ENCODE measurements at regions of chr1 and their contacts with region 1.

Region 1: GRCh38 chr1:6343506-6344405 is 49.8 kb downstream of the ACOT7 start:
- DNase-seq: peak; percentile 50
- ATAC-seq: peak; percentile 79
- H3K4me3 ChIP-seq: peak overlapping the region in 1 of 3 experiments; percentile 42; a peak in 2 of 6 replicates
- H3K27ac ChIP-seq: peak overlapping the region; percentile 17
- H3K4me1 ChIP-seq: peaks cover 12% of the 10 kb centered on the region
- H3K27me3 ChIP-seq: no peaks in the 10 kb centered on the region
- CTCF ChIP-seq: peak; percentile 98
- EP300 ChIP-seq: no peak
- POLR2A ChIP-seq: no peak
- RAD21 ChIP-seq: peak; percentile 82

Region 2: GRCh38 chr1:5415621-5416020 is 928.1 kb before region 1 on chr1:
- CTCF ChIA-PET with region 1: no interaction called
- POLR2A ChIA-PET with region 1: no interaction called
- in situ Hi-C with region 1: no loop called
- intact Hi-C with region 1: no loop called
- DNase-seq: no peak
- ATAC-seq: no peak
- H3K4me3 ChIP-seq: no peak overlapping the region
- H3K27ac ChIP-seq: no peak overlapping the region
- H3K4me1 ChIP-seq: no peaks in the 10 kb centered on the region
- H3K27me3 ChIP-seq: peaks cover 1 to 8% of the 10 kb centered on the region in 2 experiments; a peak in 4 of 5 replicates
- CTCF ChIP-seq: no peak
- EP300 ChIP-seq: no peak
- POLR2A ChIP-seq: no peak
- RAD21 ChIP-seq: no peak

Region 3: DNA sequence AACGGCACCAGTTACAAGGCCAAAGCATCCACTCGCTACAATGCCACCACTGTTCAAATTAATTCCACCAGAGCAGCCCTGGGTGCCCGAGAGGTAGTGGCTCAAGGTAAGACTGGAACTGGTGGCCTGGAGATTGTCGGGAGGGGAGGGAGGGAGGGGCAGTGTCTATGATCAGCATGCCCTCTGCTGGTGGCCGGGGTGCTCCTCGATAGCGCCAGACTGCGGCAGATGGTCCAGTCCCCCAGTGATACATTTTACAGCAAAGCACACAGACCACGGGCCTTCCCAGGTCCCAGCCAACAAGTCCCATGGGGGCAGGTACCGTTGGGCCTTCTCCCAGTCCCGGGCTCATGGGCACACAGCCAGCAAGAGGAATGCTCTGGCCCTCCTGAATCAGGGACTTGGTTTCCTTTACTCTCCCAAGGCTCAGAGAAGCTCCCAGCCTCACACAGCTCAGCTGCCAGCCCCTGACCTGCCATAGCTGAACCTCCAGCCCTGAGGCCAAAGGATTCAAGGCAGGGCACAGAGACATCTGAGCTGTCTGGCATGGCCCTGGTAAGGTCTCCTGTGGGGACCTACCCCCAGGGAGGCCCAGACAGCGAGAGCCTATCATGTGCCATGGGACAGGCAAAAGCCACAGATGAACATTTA is 34.5 kb after region 1 on chr1:
- CTCF ChIA-PET with region 1: interaction called, 3 read pairs
- POLR2A ChIA-PET with region 1: no interaction called
- in situ Hi-C with region 1: no loop called
- intact Hi-C with region 1: loop called (anchors 1 kb)
- DNase-seq: no peak
- ATAC-seq: peak; percentile 96
- H3K4me3 ChIP-seq: no peak overlapping the region
- H3K27ac ChIP-seq: no peak overlapping the region
- H3K4me1 ChIP-seq: peaks cover 6% of the 10 kb centered on the region
- H3K27me3 ChIP-seq: no peaks in the 10 kb centered on the region
- CTCF ChIP-seq: peak; percentile 79
- EP300 ChIP-seq: no peak
- POLR2A ChIP-seq: no peak
- RAD21 ChIP-seq: no peak

Region 4: DNA sequence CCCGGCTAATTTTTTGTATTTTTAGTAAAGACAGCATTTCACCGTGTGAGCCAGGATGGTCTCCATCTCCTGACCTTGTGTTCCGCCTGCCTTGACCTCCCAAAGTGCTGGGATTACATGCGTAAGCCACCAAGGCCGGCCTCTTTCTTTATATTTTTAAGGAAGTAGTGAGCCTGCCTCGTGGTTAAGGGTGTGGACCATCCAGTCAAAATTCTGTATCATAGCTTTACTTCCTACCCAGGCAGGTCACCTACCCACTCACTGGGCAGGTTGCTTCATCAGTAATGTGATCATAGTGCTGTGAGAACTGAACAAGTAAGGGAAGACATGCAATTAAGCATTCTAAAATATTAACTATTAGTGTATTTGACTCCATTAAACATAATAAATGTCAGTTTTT is 57.9 kb after region 1 on chr1:
- CTCF ChIA-PET with region 1: interaction called, 15 read pairs
- POLR2A ChIA-PET with region 1: no interaction called
- in situ Hi-C with region 1: no loop called
- intact Hi-C with region 1: no loop called
- DNase-seq: no peak
- ATAC-seq: no peak
- H3K4me3 ChIP-seq: no peak overlapping the region
- H3K27ac ChIP-seq: no peak overlapping the region
- H3K4me1 ChIP-seq: peaks cover 15% of the 10 kb centered on the region
- H3K27me3 ChIP-seq: peaks cover 0 to 10% of the 10 kb centered on the region in 2 experiments; a peak in 2 of 5 replicates
- CTCF ChIP-seq: no peak
- EP300 ChIP-seq: no peak
- POLR2A ChIP-seq: no peak
- RAD21 ChIP-seq: no peak